GM12878 (cell line): ENCODE measurements at regions of chr15 and their contacts with region 1.

Region 1: GRCh38 chr15:50354838-50355618 is at the start of gene GABPB1:
- DNase-seq: peak; percentile 60
- ATAC-seq: peak; percentile 56
- H3K4me3 ChIP-seq: peak within 1 kb of the TSS; percentile 82
- H3K27ac ChIP-seq: peak within 1 kb of the TSS; percentile 91
- H3K4me1 ChIP-seq: peaks cover 10% of the 10 kb centered on the region
- H3K27me3 ChIP-seq: no peaks in the 10 kb centered on the region
- CTCF ChIP-seq: no peak
- EP300 ChIP-seq: no peak
- POLR2A ChIP-seq: peak; percentile 90
- RAD21 ChIP-seq: no peak
- polyA plus RNA-seq, gene GABPB1: 13.9 to 18.2 TPM

Region 2: DNA sequence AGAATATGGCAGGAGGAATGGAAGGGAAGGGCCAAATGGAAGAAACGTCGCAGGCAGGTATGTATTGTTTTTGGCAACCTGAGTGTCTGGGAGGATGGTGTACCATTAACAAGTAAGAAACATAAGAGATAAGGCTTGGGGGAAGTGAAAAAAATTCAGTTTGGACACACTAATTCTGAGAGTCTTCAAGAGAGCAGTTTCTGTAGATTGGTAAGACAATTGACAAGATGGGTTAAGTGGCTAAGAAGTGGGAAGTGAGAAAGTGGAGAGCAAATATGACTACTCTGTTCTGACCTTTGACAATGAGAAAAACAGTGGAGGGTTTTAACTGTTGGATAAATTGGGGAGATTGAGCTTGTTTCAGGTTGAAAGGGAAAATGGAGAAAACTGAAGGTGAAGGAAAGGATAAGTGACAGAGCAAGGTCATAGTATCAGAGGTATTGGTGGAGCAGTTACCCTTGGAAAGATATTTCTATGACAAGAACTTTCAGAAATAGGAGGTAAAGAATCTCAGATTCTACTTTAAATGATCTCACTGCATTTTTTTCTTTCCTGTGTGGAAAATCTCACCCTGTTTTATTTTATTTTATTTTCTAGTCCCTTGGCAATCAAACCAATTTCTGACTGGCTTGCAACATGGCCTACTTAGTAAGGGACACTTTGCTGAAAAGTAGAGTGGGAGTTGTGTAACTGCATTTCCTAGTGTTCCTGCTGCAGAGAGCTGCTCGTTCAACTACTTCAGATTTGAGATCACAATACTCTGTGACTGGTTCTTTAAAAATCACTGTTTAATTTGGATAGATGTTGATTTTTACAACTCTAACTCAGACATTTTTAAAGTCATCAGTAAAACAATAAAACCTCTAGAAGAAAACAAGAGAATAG is 23.1 kb after region 1 on chr15:
- CTCF ChIA-PET with region 1: interaction called, 7 read pairs
- POLR2A ChIA-PET with region 1: interaction called, 5 read pairs
- RAD21 ChIA-PET with region 1: interaction called, 7 read pairs
- SMC1A ChIA-PET with region 1: interaction called, 38 read pairs
- in situ Hi-C with region 1: no loop called
- intact Hi-C with region 1: loop called (anchors 2 kb)
- DNase-seq: peak; percentile 93
- ATAC-seq: peak; percentile 97
- H3K4me3 ChIP-seq: no peak overlapping the region
- H3K27ac ChIP-seq: peak overlapping the region; percentile 78
- H3K4me1 ChIP-seq: peaks cover 11% of the 10 kb centered on the region
- H3K27me3 ChIP-seq: no peaks in the 10 kb centered on the region
- CTCF ChIP-seq: no peak
- EP300 ChIP-seq: peak; percentile 94 to 100
- POLR2A ChIP-seq: no peak
- RAD21 ChIP-seq: no peak

Region 3: DNA sequence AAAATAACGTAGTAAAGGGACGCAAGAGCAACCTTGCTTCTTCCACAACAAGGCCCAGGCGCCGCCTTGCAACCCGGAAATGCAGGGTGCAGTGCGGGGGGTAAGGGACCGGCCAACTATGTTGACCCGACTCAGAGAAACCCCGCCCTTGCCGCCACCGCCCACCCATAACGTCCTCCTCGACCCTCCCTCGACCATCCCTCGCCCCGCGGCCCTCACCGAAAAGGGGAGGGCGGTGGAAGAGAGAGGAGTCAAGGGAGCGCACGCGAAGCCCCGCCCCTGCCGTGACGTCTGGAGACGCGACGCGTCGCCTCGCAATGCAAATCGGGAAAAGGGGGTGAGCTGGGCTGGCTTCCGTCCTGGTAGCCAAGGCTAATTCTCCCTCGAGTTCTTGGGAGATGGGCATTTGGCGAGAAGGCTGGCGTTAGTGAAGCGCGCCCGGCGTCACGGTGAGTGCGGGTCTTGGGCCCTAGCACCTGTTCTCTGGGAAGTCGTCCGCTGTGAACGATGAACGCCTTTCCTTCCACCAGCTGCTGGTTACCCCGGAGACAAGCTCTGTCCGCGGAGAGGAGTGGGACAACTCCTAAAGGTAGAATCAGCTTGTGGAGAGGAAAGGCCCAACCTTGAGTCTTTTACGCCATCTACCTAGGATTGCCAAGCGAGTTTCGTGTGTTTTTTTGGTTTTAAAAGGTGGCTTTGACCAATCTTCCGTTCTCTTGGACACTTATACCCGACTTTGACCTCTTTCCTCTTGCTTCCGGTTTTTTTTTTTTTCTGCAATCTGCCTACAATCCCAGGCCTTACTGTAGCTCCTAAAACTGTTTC is 69.2 kb after region 1 on chr15 and contains the start of gene USP8:
- CTCF ChIA-PET with region 1: interaction called, 5 read pairs
- POLR2A ChIA-PET with region 1: interaction called, 9 read pairs
- RAD21 ChIA-PET with region 1: interaction called, 14 read pairs
- SMC1A ChIA-PET with region 1: interaction called, 9 read pairs
- in situ Hi-C with region 1: no loop called
- intact Hi-C with region 1: loop called (anchors 1 kb)
- DNase-seq: peak; percentile 85
- ATAC-seq: peak; percentile 96
- H3K4me3 ChIP-seq: peak within 1 kb of the TSS; percentile 85
- H3K27ac ChIP-seq: peak within 1 kb of the TSS; percentile 86
- H3K4me1 ChIP-seq: peaks cover 5% of the 10 kb centered on the region
- H3K27me3 ChIP-seq: no peaks in the 10 kb centered on the region
- CTCF ChIP-seq: no peak
- EP300 ChIP-seq: no peak
- POLR2A ChIP-seq: peak; percentile 92
- RAD21 ChIP-seq: 0 out of 2 replicates have a peak, but pooled peaks have one; percentile 8
- polyA plus RNA-seq, gene USP8: 25.2 to 30.2 TPM

Region 4: GRCh38 chr15:50484781-50485180 is 129.8 kb after region 1 on chr15:
- CTCF ChIA-PET with region 1: no interaction called
- POLR2A ChIA-PET with region 1: no interaction called
- RAD21 ChIA-PET with region 1: no interaction called
- SMC1A ChIA-PET with region 1: interaction called, 3 read pairs
- in situ Hi-C with region 1: no loop called
- intact Hi-C with region 1: loop called (anchors 10 kb)
- DNase-seq: peak; percentile 46
- ATAC-seq: peak; percentile 91
- H3K4me3 ChIP-seq: no peak overlapping the region
- H3K27ac ChIP-seq: no peak overlapping the region
- H3K4me1 ChIP-seq: peaks cover 9% of the 10 kb centered on the region; the same call in 1 of the 2 replicates
- H3K27me3 ChIP-seq: no peaks in the 10 kb centered on the region
- CTCF ChIP-seq: no peak
- EP300 ChIP-seq: no peak
- POLR2A ChIP-seq: no peak
- RAD21 ChIP-seq: no peak

Region 5: DNA sequence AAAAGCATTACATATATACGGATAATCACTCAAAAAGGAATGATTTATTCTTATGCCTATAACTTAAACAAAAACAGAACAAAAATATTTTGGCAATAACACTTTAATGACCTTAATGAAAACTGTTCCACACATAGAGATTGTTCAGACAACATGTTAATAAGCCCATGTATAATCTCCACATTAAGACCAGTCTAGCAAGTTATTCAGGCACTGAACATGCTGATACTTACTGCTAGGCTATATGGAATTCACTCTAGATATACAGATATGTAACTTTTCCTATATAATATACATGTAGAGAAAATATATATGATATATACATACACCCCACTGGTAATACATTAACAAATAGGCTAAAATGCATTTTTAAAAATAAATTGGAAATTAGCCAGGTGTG is 235.3 kb after region 1 on chr15:
- CTCF ChIA-PET with region 1: no interaction called
- POLR2A ChIA-PET with region 1: no interaction called
- RAD21 ChIA-PET with region 1: no interaction called
- SMC1A ChIA-PET with region 1: no interaction called
- in situ Hi-C with region 1: no loop called
- intact Hi-C with region 1: no loop called
- DNase-seq: no peak
- ATAC-seq: no peak
- H3K4me3 ChIP-seq: no peak overlapping the region
- H3K27ac ChIP-seq: no peak overlapping the region
- H3K4me1 ChIP-seq: no peaks in the 10 kb centered on the region
- H3K27me3 ChIP-seq: no peaks in the 10 kb centered on the region
- CTCF ChIP-seq: no peak
- EP300 ChIP-seq: no peak
- POLR2A ChIP-seq: no peak
- RAD21 ChIP-seq: no peak